ENCODE measurements at regions of chr13 and their contacts with region 1.

Region 1: DNA sequence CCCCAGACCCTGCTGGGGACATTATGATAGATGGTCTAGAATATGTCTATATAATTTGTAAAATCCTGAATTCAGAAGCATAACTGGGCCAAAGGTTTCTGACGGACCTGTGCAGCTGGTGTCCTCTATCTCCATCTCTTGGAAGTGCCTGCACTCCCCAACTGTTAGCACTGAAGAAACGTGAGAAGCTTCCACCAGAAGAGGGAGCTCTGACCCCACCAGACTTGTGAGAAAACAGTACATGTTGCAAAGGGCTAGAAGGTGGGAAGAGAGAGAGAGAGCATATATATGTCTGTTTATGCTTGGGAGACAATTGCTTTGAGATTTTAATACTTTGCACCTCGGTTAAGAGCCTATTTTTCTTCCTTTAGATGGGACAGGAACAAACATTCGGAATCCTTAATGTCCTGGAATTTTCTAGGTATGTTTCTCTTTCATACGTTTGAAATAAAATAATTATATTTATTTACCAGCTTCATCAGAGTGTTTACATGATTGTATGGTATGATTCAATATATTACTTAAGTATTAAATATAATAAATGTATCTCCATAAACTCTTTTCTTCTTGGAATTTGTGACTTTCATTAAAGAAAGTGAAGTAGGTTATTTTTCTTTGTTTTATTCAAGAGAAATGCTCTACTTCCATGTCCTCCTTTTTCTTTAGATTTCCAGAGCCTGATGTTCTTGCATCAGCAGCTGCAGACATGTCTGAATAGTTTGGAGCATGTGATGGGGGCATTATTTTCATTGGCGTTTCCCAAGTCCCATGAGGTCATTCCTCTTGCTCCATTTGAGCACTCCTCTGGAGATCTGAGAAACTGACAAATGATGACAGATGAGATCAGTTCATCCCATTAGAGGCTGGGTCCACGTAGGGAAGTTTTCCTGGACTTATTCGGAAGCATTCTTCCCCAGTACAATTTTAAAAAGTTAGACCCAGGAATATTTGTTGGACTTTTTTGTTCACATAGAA is 202.9 kb downstream of the ATP8A2 start:
- DNase-seq: peak; percentile 4
- H3K4me3 ChIP-seq: no peak overlapping the region
- H3K27ac ChIP-seq: no peak overlapping the region
- H3K4me1 ChIP-seq: no peaks in the 10 kb centered on the region
- H3K27me3 ChIP-seq: peaks cover 0 to 27% (median 0%) of the 10 kb centered on the region in 4 donors
- CTCF ChIP-seq: peak; percentile 34 to 82 (median 69)
- POLR2A ChIP-seq: no peak

Region 2: GRCh38 chr13:25503856-25504255 is 70.9 kb before region 1 on chr13:
- intact Hi-C with region 1: no loop called
- DNase-seq: no peak
- H3K4me3 ChIP-seq: no peak overlapping the region
- H3K27ac ChIP-seq: no peak overlapping the region
- H3K4me1 ChIP-seq: no peaks in the 10 kb centered on the region
- H3K27me3 ChIP-seq: no peaks in the 10 kb centered on the region
- CTCF ChIP-seq: no peak
- POLR2A ChIP-seq: no peak

Region 3: DNA sequence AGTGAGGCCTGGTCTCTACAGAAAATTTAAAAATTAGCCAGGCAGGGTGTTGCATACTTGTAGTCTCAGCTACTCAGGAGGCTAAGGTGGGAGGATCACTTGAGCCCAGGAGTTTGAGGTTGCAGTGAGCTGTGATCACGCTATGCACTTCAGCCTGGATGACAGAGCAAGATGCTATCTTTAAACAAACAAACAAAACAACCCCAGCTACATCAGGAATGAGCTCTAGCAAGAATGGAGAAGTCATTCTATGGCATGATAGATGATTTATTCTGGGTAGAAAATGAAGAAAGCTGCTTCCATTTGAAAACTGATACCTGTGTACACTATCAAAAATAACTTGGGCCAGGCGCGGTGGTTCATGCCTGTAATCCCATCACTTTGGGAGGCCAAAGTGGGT is 492.9 kb after region 1 on chr13:
- intact Hi-C with region 1: loop called (anchors 5 kb)
- DNase-seq: no peak
- H3K4me3 ChIP-seq: no peak overlapping the region
- H3K27ac ChIP-seq: no peak overlapping the region
- H3K4me1 ChIP-seq: no peaks in the 10 kb centered on the region
- H3K27me3 ChIP-seq: peaks cover 0 to 13% (median 0%) of the 10 kb centered on the region in 4 donors
- CTCF ChIP-seq: no peak
- POLR2A ChIP-seq: no peak